ENCODE measurements at regions of chr11 and their contacts with region 1.

Region 1: GRCh38 chr11:30322826-30323710 is at the start of gene ARL14EP:
- DNase-seq: peak; percentile 82
- ATAC-seq: peak; percentile 96
- H3K4me3 Mint-ChIP-seq: peak within 1 kb of the TSS; percentile 97
- H3K27ac Mint-ChIP-seq: peak within 1 kb of the TSS; percentile 98
- H3K4me1 Mint-ChIP-seq: peaks cover 48% of the 10 kb centered on the region
- H3K27me3 Mint-ChIP-seq: peaks cover 11% of the 10 kb centered on the region
- CTCF ChIP-seq: no peak
- total RNA-seq, gene ARL14EP: 36.5 and 40.1 TPM in 2 replicates

Region 2: GRCh38 chr11:30281476-30282288 is 41.4 kb before region 1 on chr11:
- CTCF ChIA-PET with region 1: no interaction called
- POLR2A ChIA-PET with region 1: no interaction called
- intact Hi-C with region 1: loop called (anchors 1 kb)
- DNase-seq: no peak
- ATAC-seq: no peak
- H3K4me3 Mint-ChIP-seq: no peak overlapping the region
- H3K27ac Mint-ChIP-seq: no peak overlapping the region
- H3K4me1 Mint-ChIP-seq: peaks cover 14% of the 10 kb centered on the region
- H3K27me3 Mint-ChIP-seq: no peaks in the 10 kb centered on the region
- CTCF ChIP-seq: no peak

Region 3: DNA sequence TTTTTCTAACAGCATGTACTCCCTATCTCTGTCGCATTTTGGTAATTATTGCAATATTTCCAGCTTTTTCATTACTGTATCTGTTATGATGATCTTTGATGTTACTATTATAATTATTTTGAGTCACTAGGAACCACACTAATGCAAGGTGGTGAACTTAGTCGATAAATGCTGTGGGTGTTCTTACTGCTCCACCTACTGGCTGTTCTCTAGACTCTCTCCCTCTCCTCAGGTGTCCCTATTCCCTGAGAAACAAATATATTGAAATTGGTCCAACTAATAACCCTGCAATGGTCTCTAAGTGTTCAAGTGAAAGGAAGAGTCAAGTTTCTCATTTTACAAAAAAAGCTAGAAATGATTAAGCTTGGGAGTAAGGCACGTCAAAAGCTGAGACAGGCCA is 10.3 kb after region 1 on chr11:
- CTCF ChIA-PET with region 1: interaction called, 9 read pairs
- POLR2A ChIA-PET with region 1: interaction called, 5 read pairs
- intact Hi-C with region 1: loop called (anchors 1 kb)
- DNase-seq: no peak
- ATAC-seq: no peak
- H3K4me3 Mint-ChIP-seq: no peak overlapping the region
- H3K27ac Mint-ChIP-seq: no peak overlapping the region
- H3K4me1 Mint-ChIP-seq: peaks cover 18% of the 10 kb centered on the region
- H3K27me3 Mint-ChIP-seq: no peaks in the 10 kb centered on the region
- CTCF ChIP-seq: no peak

Region 4: DNA sequence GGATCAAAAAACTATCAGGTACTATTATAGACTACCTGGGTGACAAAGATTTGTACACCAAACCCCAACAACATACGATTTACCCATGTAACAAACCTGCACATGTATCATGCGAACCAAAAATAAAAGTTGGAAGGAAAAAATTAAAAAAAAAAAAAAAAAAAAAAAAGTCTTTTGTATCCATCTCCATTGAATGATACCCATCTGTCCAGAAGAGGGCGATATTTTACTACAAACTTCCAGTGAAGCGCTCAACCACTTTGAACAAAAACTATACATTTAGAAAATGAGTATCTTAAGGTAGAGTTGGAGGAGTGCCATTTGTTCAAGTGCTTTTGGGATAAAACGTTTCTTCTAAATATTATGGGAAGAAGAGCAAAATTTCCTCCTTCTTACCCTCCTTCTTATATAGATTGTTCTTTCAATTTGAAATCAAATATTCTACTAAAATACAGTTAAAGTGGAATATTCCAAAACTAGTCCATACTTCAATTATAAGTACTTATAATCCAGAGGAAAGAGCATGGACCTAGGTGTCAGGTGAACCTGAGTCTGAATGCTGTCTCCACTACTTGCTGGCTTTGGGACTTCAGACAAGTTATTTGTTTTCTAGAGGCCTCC is 23.1 kb after region 1 on chr11:
- CTCF ChIA-PET with region 1: interaction called, 6 read pairs
- POLR2A ChIA-PET with region 1: interaction called, 25 read pairs
- intact Hi-C with region 1: loop called (anchors 1 kb)
- DNase-seq: no peak
- ATAC-seq: no peak
- H3K4me3 Mint-ChIP-seq: no peak overlapping the region
- H3K27ac Mint-ChIP-seq: no peak overlapping the region
- H3K4me1 Mint-ChIP-seq: peaks cover 38% of the 10 kb centered on the region
- H3K27me3 Mint-ChIP-seq: no peaks in the 10 kb centered on the region
- CTCF ChIP-seq: peak; percentile 50

Region 5: GRCh38 chr11:30652801-30653200 is 329.7 kb after region 1 on chr11:
- CTCF ChIA-PET with region 1: no interaction called
- POLR2A ChIA-PET with region 1: no interaction called
- intact Hi-C with region 1: no loop called
- DNase-seq: no peak
- ATAC-seq: no peak
- H3K4me3 Mint-ChIP-seq: no peak overlapping the region
- H3K27ac Mint-ChIP-seq: no peak overlapping the region
- H3K4me1 Mint-ChIP-seq: no peaks in the 10 kb centered on the region
- H3K27me3 Mint-ChIP-seq: no peaks in the 10 kb centered on the region
- CTCF ChIP-seq: no peak

Region 6: GRCh38 chr11:31369348-31370329 is 1046.6 kb after region 1 on chr11 and contains the starts of genes DCDC1 and DNAJC24:
- CTCF ChIA-PET with region 1: no interaction called
- POLR2A ChIA-PET with region 1: interaction called, 4 read pairs
- intact Hi-C with region 1: loop called (anchors 2 kb)
- DNase-seq: peak; percentile 86
- ATAC-seq: peak; percentile 98
- H3K4me3 Mint-ChIP-seq: peak within 1 kb of the TSS; percentile 97
- H3K27ac Mint-ChIP-seq: peak within 1 kb of the TSS; percentile 93
- H3K4me1 Mint-ChIP-seq: peaks cover 33% of the 10 kb centered on the region
- H3K27me3 Mint-ChIP-seq: peaks cover 12% of the 10 kb centered on the region
- CTCF ChIP-seq: no peak
- total RNA-seq, gene DCDC1: not detected in 2 replicates
- total RNA-seq, gene DNAJC24: 21.2 and 26.3 TPM in 2 replicates

Region 7: DNA sequence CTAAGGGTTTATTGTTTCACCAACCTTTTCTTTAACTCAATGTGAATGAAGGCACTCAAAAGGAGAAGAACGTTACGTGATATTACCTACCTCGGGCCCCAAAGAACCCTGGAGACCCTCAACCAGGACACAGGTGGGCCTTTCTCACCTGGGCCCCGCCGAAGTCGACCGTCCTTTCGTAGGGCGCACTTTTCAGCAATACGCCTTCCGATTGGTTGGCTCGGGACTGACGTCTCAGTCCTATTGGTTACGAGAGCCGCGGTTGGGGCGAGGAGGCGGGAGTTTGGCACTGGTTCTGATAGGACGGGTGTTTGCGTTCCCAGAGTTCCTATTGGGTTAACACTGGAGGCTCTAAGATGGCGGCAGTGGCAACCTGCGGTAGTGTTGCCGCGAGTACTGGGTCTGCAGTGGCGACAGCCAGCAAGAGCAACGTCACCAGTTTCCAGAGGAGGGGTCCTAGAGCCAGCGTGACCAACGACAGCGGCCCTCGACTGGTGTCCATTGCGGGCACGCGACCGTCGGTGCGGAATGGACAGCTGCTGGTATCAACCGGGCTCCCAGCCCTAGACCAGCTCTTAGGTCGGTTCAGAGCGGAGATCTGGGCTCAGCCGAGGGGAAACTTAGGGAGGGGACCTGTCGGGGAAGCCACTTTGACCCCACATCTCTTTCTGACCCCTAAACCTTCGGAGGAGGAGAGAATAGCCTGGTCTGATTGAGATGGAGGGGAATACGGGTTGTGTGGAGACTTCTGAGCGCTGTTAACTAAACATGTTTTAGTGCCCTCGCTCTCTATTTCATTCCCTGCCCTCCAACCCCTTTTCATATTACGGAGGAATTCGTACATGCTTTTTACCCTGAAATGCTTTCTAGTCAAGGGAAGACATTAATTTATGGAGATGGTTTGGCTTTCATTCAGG is 1186.6 kb after region 1 on chr11 and contains the starts of genes ELP4 and IMMP1L:
- CTCF ChIA-PET with region 1: no interaction called
- POLR2A ChIA-PET with region 1: no interaction called
- intact Hi-C with region 1: loop called (anchors 1 kb)
- DNase-seq: peak; percentile 84
- ATAC-seq: peak; percentile 99
- H3K4me3 Mint-ChIP-seq: peak within 1 kb of the TSS; percentile 98
- H3K27ac Mint-ChIP-seq: peak within 1 kb of the TSS; percentile 95
- H3K4me1 Mint-ChIP-seq: peaks cover 37% of the 10 kb centered on the region
- H3K27me3 Mint-ChIP-seq: no peaks in the 10 kb centered on the region
- CTCF ChIP-seq: no peak
- total RNA-seq, gene ELP4: 20.4 and 25.5 TPM in 2 replicates
- total RNA-seq, gene IMMP1L: 16.6 and 17.9 TPM in 2 replicates

Region 8: GRCh38 chr11:32090545-32091373 is 1767.7 kb after region 1 on chr11 and contains the start of gene RCN1:
- CTCF ChIA-PET with region 1: no interaction called
- POLR2A ChIA-PET with region 1: interaction called, 3 read pairs
- intact Hi-C with region 1: loop called (anchors 2 kb)
- DNase-seq: peak; percentile 50
- ATAC-seq: peak; percentile 66
- H3K4me3 Mint-ChIP-seq: peak within 1 kb of the TSS; percentile 86
- H3K27ac Mint-ChIP-seq: peak within 1 kb of the TSS; percentile 81
- H3K4me1 Mint-ChIP-seq: peaks cover 18% of the 10 kb centered on the region
- H3K27me3 Mint-ChIP-seq: peaks cover 9% of the 10 kb centered on the region
- CTCF ChIP-seq: no peak
- total RNA-seq, gene RCN1: 14.5 and 15.8 TPM in 2 replicates